ENCODE measurements at regions of chr5 and their contacts with region 1.

Region 1: DNA sequence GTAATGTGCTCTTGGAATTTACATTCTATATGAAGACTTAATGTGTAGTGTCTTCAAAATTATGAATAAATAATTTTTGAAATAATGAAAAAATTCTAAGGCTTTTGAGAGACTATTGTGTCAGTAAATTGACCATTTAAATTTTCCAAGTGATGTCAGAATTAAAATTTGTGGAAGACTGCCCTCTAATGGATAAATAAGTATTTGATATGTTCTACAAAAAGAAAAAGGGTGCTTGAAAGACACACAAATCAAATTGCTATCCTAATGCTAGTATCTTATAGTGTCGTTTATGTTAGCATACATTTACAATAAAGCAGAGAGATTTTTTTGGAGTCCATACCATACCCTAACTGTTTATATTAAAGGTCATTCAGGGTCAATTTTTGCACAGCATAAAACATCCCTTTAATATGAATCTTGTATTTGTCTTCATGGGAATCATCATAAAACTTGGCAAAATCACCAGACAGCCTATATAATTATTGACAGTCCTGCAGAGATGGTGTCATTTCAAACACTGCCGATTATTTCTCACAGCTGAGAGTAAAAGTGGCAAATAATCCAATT is 120.8 kb upstream of the SLC27A6 start:
- DNase-seq: peak; percentile 53
- H3K4me3 ChIP-seq: no peak overlapping the region
- H3K27ac ChIP-seq: no peak overlapping the region
- H3K4me1 ChIP-seq: no peaks in the 10 kb centered on the region
- H3K27me3 ChIP-seq: no peaks in the 10 kb centered on the region
- CTCF ChIP-seq: peak in 1 of 2 donors; percentile 1
- POLR2A ChIP-seq: no peak

Region 2: GRCh38 chr5:127757576-127757975 is 1086.9 kb before region 1 on chr5:
- CTCF ChIA-PET with region 1: interaction called, 3 read pairs
- POLR2A ChIA-PET with region 1: no interaction called
- dilution Hi-C with region 1: no loop called
- intact Hi-C with region 1: loop called (anchors 5 kb)
- DNase-seq: peak; percentile 83
- H3K4me3 ChIP-seq: no peak overlapping the region
- H3K27ac ChIP-seq: no peak overlapping the region
- H3K4me1 ChIP-seq: peaks cover 4% of the 10 kb centered on the region
- H3K27me3 ChIP-seq: no peaks in the 10 kb centered on the region
- CTCF ChIP-seq: peak; percentile 33 to 37
- POLR2A ChIP-seq: no peak

Region 3: GRCh38 chr5:128213340-128213739 is 631.1 kb before region 1 on chr5:
- CTCF ChIA-PET with region 1: interaction called, 14 read pairs
- POLR2A ChIA-PET with region 1: no interaction called
- dilution Hi-C with region 1: no loop called
- intact Hi-C with region 1: loop called (anchors 1 kb)
- DNase-seq: peak; percentile 68
- H3K4me3 ChIP-seq: no peak overlapping the region
- H3K27ac ChIP-seq: no peak overlapping the region
- H3K4me1 ChIP-seq: no peaks in the 10 kb centered on the region
- H3K27me3 ChIP-seq: no peaks in the 10 kb centered on the region
- CTCF ChIP-seq: peak; percentile 63 to 73
- POLR2A ChIP-seq: no peak

Region 4: GRCh38 chr5:128498844-128499455 is 345.5 kb before region 1 on chr5:
- CTCF ChIA-PET with region 1: interaction called, 8 read pairs
- POLR2A ChIA-PET with region 1: no interaction called
- dilution Hi-C with region 1: no loop called
- intact Hi-C with region 1: loop called (anchors 5 kb)
- DNase-seq: peak; percentile 60
- H3K4me3 ChIP-seq: no peak overlapping the region
- H3K27ac ChIP-seq: no peak overlapping the region
- H3K4me1 ChIP-seq: no peaks in the 10 kb centered on the region
- H3K27me3 ChIP-seq: no peaks in the 10 kb centered on the region
- CTCF ChIP-seq: peak in 1 of 2 donors; percentile 15
- POLR2A ChIP-seq: no peak

Region 5: DNA sequence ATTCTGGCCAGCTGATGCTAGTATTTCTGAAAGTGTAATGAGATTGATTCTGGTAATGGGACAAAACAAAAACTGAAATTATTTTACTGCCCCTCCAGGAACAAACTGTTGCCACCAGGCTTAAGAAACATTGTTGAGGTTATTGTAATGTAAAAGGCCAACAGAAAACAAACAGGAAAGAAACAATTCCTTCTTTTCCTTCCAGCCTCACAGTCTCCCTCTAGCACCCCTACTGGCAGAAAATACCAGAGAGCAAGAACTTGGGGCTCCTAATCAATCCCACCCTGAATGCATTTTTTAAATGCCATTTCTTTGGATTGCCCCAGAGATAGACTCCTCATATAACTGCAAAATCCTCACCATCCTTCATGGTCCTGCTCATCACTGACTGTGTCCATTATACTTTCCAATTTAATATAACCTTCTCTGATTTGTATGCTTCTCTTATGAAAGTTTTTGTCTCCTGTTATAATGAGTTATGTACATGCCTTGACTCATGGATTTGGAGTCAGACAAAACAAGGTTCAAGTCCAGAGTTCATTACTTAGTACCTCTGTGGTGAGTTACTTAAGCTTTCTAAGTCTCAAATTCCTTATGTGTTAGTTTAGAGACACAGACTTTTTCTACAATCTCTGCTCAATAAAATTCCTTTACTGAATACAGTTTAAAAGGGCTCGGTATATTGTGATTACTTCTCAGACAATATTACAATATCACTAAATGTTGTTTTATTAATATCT is 148.5 kb before region 1 on chr5:
- CTCF ChIA-PET with region 1: no interaction called
- POLR2A ChIA-PET with region 1: no interaction called
- dilution Hi-C with region 1: no loop called
- intact Hi-C with region 1: loop called (anchors 5 kb)
- DNase-seq: no peak
- H3K4me3 ChIP-seq: no peak overlapping the region
- H3K27ac ChIP-seq: no peak overlapping the region
- H3K4me1 ChIP-seq: no peaks in the 10 kb centered on the region
- H3K27me3 ChIP-seq: no peaks in the 10 kb centered on the region
- CTCF ChIP-seq: peak; percentile 17 to 28
- POLR2A ChIP-seq: no peak

Region 6: DNA sequence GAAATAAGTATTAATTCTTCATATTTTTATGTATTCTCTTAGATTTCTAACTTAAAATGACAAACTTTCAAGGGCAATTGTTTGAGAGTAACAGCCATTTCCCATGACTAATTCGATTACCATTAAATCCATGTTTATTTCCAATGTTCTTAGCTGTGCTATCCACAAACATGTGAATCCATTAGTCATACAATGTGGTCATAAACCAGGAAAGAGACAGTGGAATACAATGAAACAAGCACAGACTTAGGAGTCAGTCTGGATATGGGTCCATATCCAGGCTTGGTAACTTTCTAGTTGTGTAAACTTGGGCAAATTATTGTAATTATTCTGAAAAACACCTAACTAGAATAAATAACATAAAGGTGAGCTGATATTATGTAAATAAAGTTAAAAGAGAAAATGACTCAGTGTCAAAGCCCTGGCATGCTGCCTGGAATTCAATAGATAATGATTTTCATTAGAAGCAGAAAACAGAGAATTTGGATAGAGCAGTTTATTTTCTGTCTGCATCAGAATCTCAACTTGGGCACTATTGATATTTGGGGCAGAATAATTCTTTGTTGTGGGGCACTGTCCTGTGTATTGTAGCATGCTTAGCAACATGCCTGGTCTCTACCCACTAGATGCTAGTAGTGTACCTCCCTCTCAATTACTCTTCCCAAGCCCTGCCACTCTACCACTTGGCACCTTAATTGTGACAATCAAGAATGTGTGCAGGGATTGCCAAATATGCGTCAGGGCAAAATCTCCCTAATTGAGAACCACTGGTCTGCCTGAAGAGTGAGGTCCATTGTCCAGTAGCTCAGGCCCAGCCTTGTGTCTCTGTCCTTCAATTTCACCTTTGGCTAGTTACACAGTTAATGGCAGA is 76.1 kb after region 1 on chr5:
- CTCF ChIA-PET with region 1: no interaction called
- POLR2A ChIA-PET with region 1: no interaction called
- dilution Hi-C with region 1: no loop called
- intact Hi-C with region 1: no loop called
- DNase-seq: peak; percentile 90
- H3K4me3 ChIP-seq: no peak overlapping the region
- H3K27ac ChIP-seq: peak overlapping the region; percentile 87
- H3K4me1 ChIP-seq: peaks cover 15% of the 10 kb centered on the region
- H3K27me3 ChIP-seq: no peaks in the 10 kb centered on the region
- CTCF ChIP-seq: no peak
- POLR2A ChIP-seq: no peak

Measured in endothelial cell of umbilical vein (primary cell).